Activated B cell treated with CpG ODN at 0.5 μM for 24 hours (primary cell): ENCODE measurements at regions of chr7 and their contacts with region 1.

Region 1: GRCh38 chr7:94632338-94633013 is 23.5 kb downstream of the SGCE start:
- DNase-seq: no peak
- ATAC-seq: no peak
- H3K4me3 Mint-ChIP-seq: no peak overlapping the region
- H3K27ac Mint-ChIP-seq: no peak overlapping the region
- H3K4me1 Mint-ChIP-seq: no peaks in the 10 kb centered on the region
- H3K27me3 Mint-ChIP-seq: peaks cover 5% of the 10 kb centered on the region
- CTCF ChIP-seq: no peak

Region 2: DNA sequence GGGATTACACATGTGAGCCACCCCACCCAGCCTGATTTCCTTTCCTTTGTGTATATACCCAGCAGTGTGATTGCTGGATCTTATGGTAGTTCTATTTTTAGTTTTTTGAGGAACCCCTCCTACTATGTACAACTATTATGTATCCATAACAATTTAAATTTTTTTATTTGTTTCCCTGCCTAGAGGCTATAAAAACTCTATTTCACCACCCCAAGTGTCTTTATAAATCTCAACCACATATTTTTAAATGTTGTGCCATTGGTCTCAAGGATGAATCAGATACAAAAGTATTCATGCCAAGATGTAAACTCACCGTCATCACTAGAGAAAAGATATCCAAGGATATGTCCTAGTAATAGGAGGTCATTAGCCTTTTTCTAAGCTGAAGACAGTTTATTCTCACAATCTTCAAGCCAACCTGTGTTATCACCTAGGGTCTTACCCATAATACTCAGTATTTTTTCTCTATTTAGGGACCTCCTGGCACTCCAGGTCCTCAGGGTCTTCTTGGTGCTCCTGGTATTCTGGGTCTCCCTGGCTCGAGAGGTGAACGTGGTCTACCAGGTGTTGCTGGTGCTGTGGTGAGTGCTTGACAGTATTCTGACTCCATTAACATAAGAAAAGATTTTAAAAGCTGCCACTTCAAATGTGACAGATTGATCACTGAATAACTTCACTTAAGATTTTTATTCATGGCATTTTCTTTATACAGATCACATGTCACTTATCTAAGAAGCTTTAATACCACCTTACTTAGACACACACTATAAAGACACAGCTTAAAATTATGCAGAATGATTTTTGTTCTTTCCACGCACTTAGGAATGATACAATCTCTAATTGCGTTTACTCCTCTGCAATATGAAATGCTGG is 208.4 kb before region 1 on chr7:
- CTCF ChIA-PET with region 1: no interaction called
- POLR2A ChIA-PET with region 1: no interaction called
- intact Hi-C with region 1: no loop called
- DNase-seq: no peak
- ATAC-seq: no peak
- H3K4me3 Mint-ChIP-seq: no peak overlapping the region
- H3K27ac Mint-ChIP-seq: no peak overlapping the region
- H3K4me1 Mint-ChIP-seq: no peaks in the 10 kb centered on the region
- H3K27me3 Mint-ChIP-seq: peaks cover 7% of the 10 kb centered on the region
- CTCF ChIP-seq: no peak

Region 3: DNA sequence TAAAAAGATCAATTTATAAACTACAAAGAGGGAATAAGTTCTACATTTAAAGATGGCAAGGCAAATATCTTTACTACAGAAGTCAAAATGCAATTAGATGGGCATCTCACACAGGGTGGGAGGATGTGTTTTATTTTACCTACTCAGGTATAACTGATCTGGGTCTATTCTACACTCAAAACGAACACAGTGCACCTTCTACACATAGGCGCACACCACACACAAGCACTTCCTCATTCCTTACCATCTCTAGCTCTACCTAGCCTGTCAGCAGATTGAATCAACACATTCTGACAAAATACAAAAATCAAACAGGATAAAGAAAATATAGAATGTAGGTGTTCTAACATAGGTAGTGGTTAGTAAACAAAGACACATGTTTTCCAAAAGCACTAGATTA is 41.3 kb before region 1 on chr7:
- CTCF ChIA-PET with region 1: no interaction called
- POLR2A ChIA-PET with region 1: no interaction called
- intact Hi-C with region 1: loop called (anchors 5 kb)
- DNase-seq: no peak
- ATAC-seq: peak; percentile 90
- H3K4me3 Mint-ChIP-seq: peak overlapping the region; percentile 42
- H3K27ac Mint-ChIP-seq: peak overlapping the region; percentile 0
- H3K4me1 Mint-ChIP-seq: peaks cover 17% of the 10 kb centered on the region
- H3K27me3 Mint-ChIP-seq: no peaks in the 10 kb centered on the region
- CTCF ChIP-seq: no peak

Region 4: DNA sequence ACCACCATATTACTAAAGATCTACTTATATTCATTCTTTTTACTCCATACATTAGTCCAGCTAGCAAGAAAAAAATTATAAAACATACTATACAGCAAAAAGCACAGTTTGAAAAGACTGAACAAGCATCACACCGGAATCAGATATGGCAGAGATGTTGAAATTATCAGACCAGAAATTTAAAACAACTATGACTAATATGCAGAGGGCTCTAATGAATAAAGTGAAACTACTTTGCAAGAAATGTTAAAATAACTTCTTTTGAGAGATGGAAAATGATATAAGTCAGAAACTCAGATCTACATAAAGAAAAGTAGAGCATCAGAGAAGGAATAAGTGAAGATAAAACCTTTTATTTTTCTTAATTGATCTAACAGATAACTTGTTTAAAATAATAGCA is 27.4 kb before region 1 on chr7:
- CTCF ChIA-PET with region 1: no interaction called
- POLR2A ChIA-PET with region 1: no interaction called
- intact Hi-C with region 1: no loop called
- DNase-seq: no peak
- ATAC-seq: no peak
- H3K4me3 Mint-ChIP-seq: no peak overlapping the region
- H3K27ac Mint-ChIP-seq: no peak overlapping the region
- H3K4me1 Mint-ChIP-seq: peaks cover 4% of the 10 kb centered on the region
- H3K27me3 Mint-ChIP-seq: no peaks in the 10 kb centered on the region
- CTCF ChIP-seq: no peak

Region 5: GRCh38 chr7:94666879-94667587 is 34.6 kb after region 1 on chr7:
- CTCF ChIA-PET with region 1: no interaction called
- POLR2A ChIA-PET with region 1: no interaction called
- intact Hi-C with region 1: no loop called
- DNase-seq: no peak
- ATAC-seq: no peak
- H3K4me3 Mint-ChIP-seq: no peak overlapping the region
- H3K27ac Mint-ChIP-seq: no peak overlapping the region
- H3K4me1 Mint-ChIP-seq: no peaks in the 10 kb centered on the region
- H3K27me3 Mint-ChIP-seq: peaks cover 11% of the 10 kb centered on the region
- CTCF ChIP-seq: no peak